HepG2 (cell line): ENCODE measurements at regions of chr10 and their contacts with region 1.

Region 1: DNA sequence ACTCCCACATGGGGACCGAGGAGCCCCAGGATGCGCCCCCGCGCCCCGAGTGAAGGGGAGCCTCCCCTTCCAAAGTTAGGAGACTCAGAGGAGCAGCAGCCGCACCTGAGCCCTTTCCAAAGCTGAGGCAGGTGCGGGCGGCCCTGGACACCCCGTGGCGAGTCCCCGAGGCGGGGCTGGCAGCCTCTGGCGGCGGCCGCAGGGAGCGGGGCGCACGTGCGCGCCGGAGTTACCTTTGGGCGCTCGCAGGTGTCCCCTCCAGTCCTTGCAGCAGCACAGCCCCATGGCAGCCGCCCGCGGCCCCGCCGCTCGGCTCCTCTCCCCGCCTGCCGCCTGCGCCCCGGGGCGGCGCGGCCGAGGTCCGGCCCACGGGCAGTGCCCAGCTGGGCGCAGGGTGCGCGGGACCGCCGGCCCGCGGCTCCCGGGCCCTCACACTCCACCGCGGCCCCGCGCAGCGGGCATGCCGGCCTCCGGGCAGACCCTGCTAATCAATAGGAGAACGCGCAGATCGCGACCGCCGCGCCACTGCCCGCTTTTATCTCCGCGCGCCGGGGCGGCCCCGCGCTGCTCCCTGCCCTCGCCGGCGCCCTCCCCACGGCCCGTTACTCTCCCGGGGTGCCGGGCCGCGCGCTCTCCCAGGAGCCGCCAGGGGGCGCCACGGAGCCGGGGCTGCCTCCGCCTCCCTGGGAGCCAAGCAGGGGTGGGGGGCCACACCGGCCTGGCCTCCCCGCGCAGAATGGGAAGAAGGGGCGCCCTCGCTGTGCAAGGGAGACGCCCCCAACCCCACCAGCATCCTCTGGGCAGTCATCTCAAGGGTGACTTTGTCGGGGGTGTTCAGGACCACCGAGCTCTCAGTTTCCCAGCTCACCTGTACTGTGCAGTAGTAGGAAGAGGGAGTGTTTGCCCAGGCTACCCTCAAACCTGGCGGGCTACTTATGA is 80.8 kb downstream of the ARHGAP22 start:
- DNase-seq: no peak
- ATAC-seq: peak; percentile 62
- H3K4me3 ChIP-seq: peak overlapping the region; percentile 25 to 54 (median 45); a peak in 3 of 6 replicates
- H3K27ac ChIP-seq: no peak overlapping the region
- H3K4me1 ChIP-seq: 0 out of 2 replicates have a peak, but pooled peaks cover 5% of the 10 kb centered on the region
- H3K27me3 ChIP-seq: peaks cover 0 to 50% of the 10 kb centered on the region in 2 experiments
- CTCF ChIP-seq: peak; percentile 60
- EP300 ChIP-seq: no peak
- POLR2A ChIP-seq: no peak
- RAD21 ChIP-seq: no peak

Region 2: DNA sequence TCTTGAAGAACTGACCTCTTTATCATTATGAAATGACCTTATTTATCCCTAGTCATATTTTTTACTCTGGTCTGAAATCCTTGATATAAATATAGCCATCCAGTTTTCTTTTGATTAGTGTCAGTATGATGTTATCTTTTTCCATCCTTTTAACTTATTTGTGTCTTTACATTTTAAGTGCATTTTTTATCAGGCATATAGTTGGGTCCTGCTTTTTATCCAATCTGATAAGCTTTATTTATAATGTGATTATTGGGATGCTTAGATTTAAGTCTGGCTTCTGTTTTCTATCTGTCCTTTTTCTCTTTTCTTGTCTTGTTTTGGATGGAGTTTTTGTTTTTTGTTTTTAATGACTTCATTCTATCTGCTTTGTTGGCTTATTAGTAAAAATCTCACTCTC is 38.4 kb before region 1 on chr10:
- CTCF ChIA-PET with region 1: no interaction called
- POLR2A ChIA-PET with region 1: no interaction called
- in situ Hi-C with region 1: no loop called
- intact Hi-C with region 1: loop called (anchors 1 kb)
- DNase-seq: no peak
- ATAC-seq: no peak
- H3K4me3 ChIP-seq: no peak overlapping the region
- H3K27ac ChIP-seq: no peak overlapping the region
- H3K4me1 ChIP-seq: peaks cover 10% of the 10 kb centered on the region
- H3K27me3 ChIP-seq: peaks cover 0 to 4% of the 10 kb centered on the region in 2 experiments; a peak in 1 of 5 replicates
- CTCF ChIP-seq: no peak
- EP300 ChIP-seq: no peak
- POLR2A ChIP-seq: no peak
- RAD21 ChIP-seq: no peak

Region 3: GRCh38 chr10:48541144-48541795 is 17.2 kb after region 1 on chr10:
- CTCF ChIA-PET with region 1: no interaction called
- POLR2A ChIA-PET with region 1: no interaction called
- in situ Hi-C with region 1: no loop called
- intact Hi-C with region 1: no loop called
- DNase-seq: no peak
- ATAC-seq: no peak
- H3K4me3 ChIP-seq: no peak overlapping the region
- H3K27ac ChIP-seq: no peak overlapping the region
- H3K4me1 ChIP-seq: no peaks in the 10 kb centered on the region
- H3K27me3 ChIP-seq: peaks cover under 1 to 5% of the 10 kb centered on the region in 2 experiments; a peak in 3 of 5 replicates
- CTCF ChIP-seq: no peak
- EP300 ChIP-seq: no peak
- POLR2A ChIP-seq: no peak
- RAD21 ChIP-seq: no peak

Region 4: GRCh38 chr10:48572414-48572813 is 48.3 kb after region 1 on chr10:
- CTCF ChIA-PET with region 1: no interaction called
- POLR2A ChIA-PET with region 1: no interaction called
- in situ Hi-C with region 1: no loop called
- intact Hi-C with region 1: no loop called
- DNase-seq: no peak
- ATAC-seq: no peak
- H3K4me3 ChIP-seq: no peak overlapping the region
- H3K27ac ChIP-seq: no peak overlapping the region
- H3K4me1 ChIP-seq: no peaks in the 10 kb centered on the region
- H3K27me3 ChIP-seq: peaks cover 0 to 10% of the 10 kb centered on the region in 2 experiments; a peak in 2 of 5 replicates
- CTCF ChIP-seq: no peak
- EP300 ChIP-seq: no peak
- POLR2A ChIP-seq: no peak
- RAD21 ChIP-seq: no peak

Region 5: DNA sequence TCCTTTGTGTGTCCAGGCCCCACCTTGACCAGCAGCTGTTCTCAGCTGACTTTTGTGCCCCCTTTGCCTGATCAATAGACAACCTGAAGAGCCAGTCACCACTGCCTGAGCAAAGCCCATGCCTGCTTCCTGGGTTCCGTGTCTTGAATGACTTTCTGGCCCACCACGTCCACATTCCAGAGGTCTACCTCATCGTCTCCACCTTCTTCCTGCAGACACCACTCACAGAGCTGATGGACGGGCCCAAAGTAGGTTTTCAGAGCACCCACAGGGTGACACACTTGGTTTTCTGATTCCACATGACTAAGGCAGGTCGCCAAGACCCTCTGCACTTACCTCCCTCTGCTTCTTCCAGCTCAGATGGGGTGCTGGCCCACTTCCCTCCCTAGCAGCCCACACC is 287.4 kb after region 1 on chr10:
- CTCF ChIA-PET with region 1: no interaction called
- POLR2A ChIA-PET with region 1: no interaction called
- in situ Hi-C with region 1: no loop called
- intact Hi-C with region 1: no loop called
- DNase-seq: no peak
- ATAC-seq: no peak
- H3K4me3 ChIP-seq: no peak overlapping the region
- H3K27ac ChIP-seq: no peak overlapping the region
- H3K4me1 ChIP-seq: no peaks in the 10 kb centered on the region
- H3K27me3 ChIP-seq: no peaks in the 10 kb centered on the region; a peak in 1 of 5 replicates
- CTCF ChIP-seq: no peak
- EP300 ChIP-seq: no peak
- POLR2A ChIP-seq: no peak
- RAD21 ChIP-seq: no peak